ENCODE measurements at regions of chr6 and their contacts with region 1.

Region 1: GRCh38 chr6:20056350-20056992 is 155.8 kb downstream of the MBOAT1 start:
- DNase-seq: peak; percentile 79
- H3K4me3 ChIP-seq: no peak overlapping the region
- H3K27ac ChIP-seq: no peak overlapping the region
- H3K4me1 ChIP-seq: peaks cover 5% of the 10 kb centered on the region
- H3K27me3 ChIP-seq: no peaks in the 10 kb centered on the region
- CTCF ChIP-seq: peak; percentile 78

Region 2: GRCh38 chr6:18323935-18324705 is 1732.4 kb before region 1 on chr6:
- CTCF ChIA-PET with region 1: no interaction called
- POLR2A ChIA-PET with region 1: no interaction called
- intact Hi-C with region 1: loop called (anchors 10 kb)
- DNase-seq: peak; percentile 77
- H3K4me3 ChIP-seq: no peak overlapping the region
- H3K27ac ChIP-seq: no peak overlapping the region
- H3K4me1 ChIP-seq: peaks cover 8% of the 10 kb centered on the region
- H3K27me3 ChIP-seq: no peaks in the 10 kb centered on the region
- CTCF ChIP-seq: peak; percentile 81

Region 3: DNA sequence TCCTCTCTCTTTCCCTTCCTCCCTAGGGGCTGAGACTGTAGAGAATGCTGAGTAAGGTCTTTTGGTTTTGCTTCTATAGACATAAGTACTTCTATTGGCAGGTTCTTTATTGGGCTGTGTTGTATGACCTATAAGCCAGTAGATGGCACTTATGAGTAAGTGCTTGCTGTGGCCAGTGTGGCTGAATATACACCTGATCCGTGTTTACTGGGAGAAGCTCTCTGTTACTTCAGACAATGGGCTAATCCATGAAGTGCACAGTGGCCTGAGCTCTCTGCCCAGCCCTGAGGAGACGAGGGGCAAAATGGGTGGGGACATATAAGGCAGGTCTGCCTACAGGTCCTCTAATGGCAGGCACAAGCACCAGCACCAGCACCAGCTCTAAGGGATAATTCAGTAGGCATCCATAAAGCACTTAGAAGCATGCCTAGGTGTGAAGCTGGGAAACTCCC is 1059.1 kb before region 1 on chr6:
- CTCF ChIA-PET with region 1: interaction called, 4 read pairs
- POLR2A ChIA-PET with region 1: no interaction called
- intact Hi-C with region 1: loop called (anchors 5 kb)
- DNase-seq: peak; percentile 73
- H3K4me3 ChIP-seq: no peak overlapping the region
- H3K27ac ChIP-seq: no peak overlapping the region
- H3K4me1 ChIP-seq: no peaks in the 10 kb centered on the region
- H3K27me3 ChIP-seq: no peaks in the 10 kb centered on the region
- CTCF ChIP-seq: peak; percentile 81

Region 4: DNA sequence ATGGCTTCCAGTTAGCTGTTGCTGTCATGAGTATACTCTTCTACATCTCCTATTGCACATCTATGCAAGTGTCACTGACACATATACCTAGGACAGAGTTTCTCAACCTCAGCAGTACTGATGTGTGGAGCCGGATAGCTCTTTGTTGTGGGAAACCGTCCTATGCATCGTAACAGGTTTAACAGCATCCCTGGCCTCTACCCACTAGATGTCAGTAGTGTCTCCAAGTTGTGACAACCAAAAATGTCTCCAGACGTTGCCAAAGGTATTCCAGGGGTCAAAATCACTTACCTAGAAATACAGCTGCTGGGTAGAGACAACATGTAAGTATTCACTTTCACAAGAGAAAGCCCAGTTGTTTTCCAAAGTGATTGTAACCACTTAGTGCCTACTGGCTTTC is 1031.7 kb before region 1 on chr6:
- CTCF ChIA-PET with region 1: interaction called, 7 read pairs
- POLR2A ChIA-PET with region 1: no interaction called
- intact Hi-C with region 1: loop called (anchors 10 kb)
- DNase-seq: peak; percentile 70
- H3K4me3 ChIP-seq: no peak overlapping the region
- H3K27ac ChIP-seq: no peak overlapping the region
- H3K4me1 ChIP-seq: no peaks in the 10 kb centered on the region
- H3K27me3 ChIP-seq: no peaks in the 10 kb centered on the region
- CTCF ChIP-seq: peak; percentile 71

Measured in A673 (cell line).